Colonic mucosa (tissue), 4 donors: ENCODE measurements at regions of chr2 and their contacts with region 1.

Region 1: DNA sequence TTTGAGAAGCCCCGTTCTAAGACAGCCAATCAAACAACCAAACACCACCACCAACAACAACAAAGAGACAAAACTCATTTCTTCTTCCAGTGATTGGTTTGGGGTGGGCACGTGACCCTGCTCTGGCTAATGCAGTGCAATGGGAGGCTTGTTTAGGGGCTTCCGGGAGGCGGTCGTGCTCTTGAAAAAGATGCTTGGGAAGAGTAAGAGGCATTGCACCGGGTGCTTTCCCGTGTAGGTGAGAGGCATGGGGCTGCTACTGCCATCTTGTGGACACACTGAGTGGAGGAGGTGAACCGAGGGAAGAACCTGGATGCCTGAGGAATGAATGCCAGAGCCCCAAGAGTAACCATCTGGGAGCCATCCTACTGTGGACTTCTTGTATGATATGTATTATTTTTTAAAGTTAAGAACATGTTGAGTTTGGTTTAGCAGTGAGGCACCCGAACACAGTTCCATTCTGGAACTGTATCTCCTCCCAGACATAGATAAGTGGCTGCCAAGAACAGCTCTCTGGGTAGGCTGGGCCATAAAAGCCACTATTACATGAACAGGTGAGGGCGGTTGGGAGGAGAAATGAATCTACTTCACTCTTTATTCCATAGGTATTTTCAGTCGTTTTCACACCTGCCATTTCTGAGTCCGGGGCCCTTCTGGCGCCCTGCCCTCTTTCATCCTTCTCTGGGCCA is 19.1 kb upstream of the ARHGAP25 start:
- DNase-seq: peak; percentile 66
- H3K4me3 ChIP-seq: no peak overlapping the region
- H3K27ac ChIP-seq: peak overlapping the region; percentile 33
- H3K4me1 ChIP-seq: no peaks in the 10 kb centered on the region
- H3K27me3 ChIP-seq: no peaks in the 10 kb centered on the region
- CTCF ChIP-seq: peak; percentile 64

Region 2: GRCh38 chr2:68467077-68467960 is 248.2 kb before region 1 on chr2 and contains the starts of genes APLF and FBXO48:
- intact Hi-C with region 1: loop called (anchors 5 kb)
- DNase-seq: peak; percentile 99
- H3K4me3 ChIP-seq: peak within 1 kb of the TSS; percentile 80
- H3K27ac ChIP-seq: peak within 1 kb of the TSS; percentile 82
- H3K4me1 ChIP-seq: peaks cover 5% of the 10 kb centered on the region
- H3K27me3 ChIP-seq: no peaks in the 10 kb centered on the region
- CTCF ChIP-seq: no peak
- total RNA-seq, gene APLF: 0.96 to 2.6 TPM
- total RNA-seq, gene FBXO48: 1.5 to 2.3 TPM

Region 3: DNA sequence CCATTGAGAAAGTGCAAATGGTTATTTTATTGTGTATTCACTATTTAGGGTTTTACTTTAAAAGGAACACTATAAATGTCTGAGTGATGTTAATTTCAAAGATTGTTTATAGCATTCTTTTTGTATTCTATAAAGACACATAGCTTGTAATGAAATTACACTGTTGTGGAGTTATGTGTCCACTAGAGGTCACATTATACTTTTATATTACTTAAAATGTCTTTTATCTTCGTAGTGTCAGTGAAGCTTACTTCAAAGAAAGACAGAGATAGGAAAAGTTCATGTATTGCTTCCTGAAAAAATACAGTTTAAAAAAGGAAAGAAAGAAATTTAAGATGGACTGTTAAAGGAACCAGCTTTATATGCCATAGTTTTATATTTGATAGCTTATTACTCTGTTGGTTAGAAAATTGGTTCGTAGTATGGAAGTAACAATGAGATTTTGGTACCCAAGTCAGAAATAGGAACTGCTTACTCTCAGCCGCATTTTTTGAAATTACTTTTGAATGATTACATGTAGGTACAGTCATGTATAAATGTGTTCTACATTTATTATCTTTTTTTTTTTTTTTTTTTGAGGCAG is 227.6 kb before region 1 on chr2:
- intact Hi-C with region 1: loop called (anchors 5 kb)
- DNase-seq: no peak
- H3K4me3 ChIP-seq: no peak overlapping the region
- H3K27ac ChIP-seq: no peak overlapping the region
- H3K4me1 ChIP-seq: no peaks in the 10 kb centered on the region
- H3K27me3 ChIP-seq: no peaks in the 10 kb centered on the region
- CTCF ChIP-seq: peak; percentile 46

Region 4: DNA sequence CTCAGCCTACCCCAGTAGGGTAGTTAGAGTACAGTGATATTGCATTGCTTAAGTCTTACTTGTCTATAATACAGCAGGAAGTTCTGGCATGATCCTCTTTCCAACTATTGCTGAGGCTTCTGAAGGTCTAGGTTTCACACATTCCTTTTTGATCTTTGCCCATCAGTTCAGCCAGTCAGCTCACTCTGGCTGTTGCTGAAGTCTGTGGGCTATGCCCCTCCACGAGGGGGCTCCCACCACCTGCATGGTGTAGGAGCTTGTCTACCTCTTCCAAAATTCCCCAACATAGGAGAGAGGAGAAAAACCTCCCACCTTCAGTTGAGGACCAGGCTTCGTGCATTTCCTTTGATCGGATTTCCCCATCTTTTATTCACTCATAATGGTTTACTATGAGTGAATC is 45.8 kb before region 1 on chr2:
- intact Hi-C with region 1: no loop called
- DNase-seq: no peak
- H3K4me3 ChIP-seq: no peak overlapping the region
- H3K27ac ChIP-seq: no peak overlapping the region
- H3K4me1 ChIP-seq: no peaks in the 10 kb centered on the region
- H3K27me3 ChIP-seq: no peaks in the 10 kb centered on the region
- CTCF ChIP-seq: no peak